Activated B cell treated with CpG ODN at 0.5 μM for 24 hours (primary cell): ENCODE measurements at regions of chr3 and their contacts with region 1.

Region 1: DNA sequence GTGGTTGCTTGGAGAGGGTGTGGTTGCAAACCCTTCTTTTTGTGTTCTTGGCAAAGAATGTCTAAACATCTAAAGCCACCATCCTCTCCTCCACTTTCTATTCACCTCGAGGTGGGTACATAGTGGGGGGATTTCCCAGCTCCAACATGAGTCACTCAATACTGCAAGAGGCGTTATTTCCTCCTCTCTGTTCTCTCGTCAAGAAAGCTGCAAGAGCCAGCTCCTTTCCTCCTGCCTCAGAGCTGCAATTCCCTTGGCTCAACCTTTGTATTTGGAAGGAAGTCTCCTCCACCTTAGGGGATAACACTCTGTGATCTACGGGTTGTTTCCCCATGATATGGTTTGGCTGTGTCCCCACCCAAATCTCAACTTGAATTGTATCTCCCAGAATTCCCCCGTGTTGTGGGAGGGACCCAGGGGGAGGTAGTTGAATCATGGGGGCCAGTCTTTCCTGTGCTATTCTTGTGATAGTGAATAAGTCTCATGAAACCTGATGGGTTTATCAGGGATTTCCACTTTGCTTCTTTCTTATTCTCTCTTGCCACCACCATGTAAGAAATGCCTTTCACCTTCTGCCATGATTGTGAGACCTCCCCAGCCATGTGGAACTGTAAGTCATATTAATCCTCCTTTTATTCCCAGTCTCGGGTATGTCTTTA is 138.4 kb downstream of the PLCL2 start:
- DNase-seq: no peak
- ATAC-seq: peak; percentile 99
- H3K4me3 Mint-ChIP-seq: peak overlapping the region; percentile 49
- H3K27ac Mint-ChIP-seq: peak overlapping the region; percentile 89
- H3K4me1 Mint-ChIP-seq: peaks cover 43% of the 10 kb centered on the region
- H3K27me3 Mint-ChIP-seq: no peaks in the 10 kb centered on the region
- CTCF ChIP-seq: no peak

Region 2: DNA sequence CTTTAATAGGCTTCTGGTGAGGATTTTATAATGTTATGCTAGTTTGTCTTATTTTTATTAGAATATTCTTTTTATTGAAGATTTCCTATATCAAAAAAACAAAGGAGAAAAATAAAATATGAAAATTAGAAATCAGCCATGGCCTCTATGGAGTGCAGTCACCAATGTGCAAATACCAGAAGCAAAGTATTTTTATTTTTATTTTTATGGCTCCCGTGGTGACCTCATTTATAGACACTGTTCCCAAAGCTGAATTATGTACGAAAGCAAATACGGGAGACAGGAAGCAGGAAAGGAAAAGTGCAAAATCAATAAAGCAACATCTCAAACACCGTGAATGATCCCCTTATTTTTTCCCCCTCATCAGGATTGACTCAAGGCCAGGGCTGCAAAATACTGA is 453.0 kb before region 1 on chr3:
- CTCF ChIA-PET with region 1: no interaction called
- POLR2A ChIA-PET with region 1: no interaction called
- intact Hi-C with region 1: no loop called
- DNase-seq: no peak
- ATAC-seq: no peak
- H3K4me3 Mint-ChIP-seq: no peak overlapping the region
- H3K27ac Mint-ChIP-seq: no peak overlapping the region
- H3K4me1 Mint-ChIP-seq: no peaks in the 10 kb centered on the region
- H3K27me3 Mint-ChIP-seq: peaks cover 12% of the 10 kb centered on the region
- CTCF ChIP-seq: no peak

Region 3: DNA sequence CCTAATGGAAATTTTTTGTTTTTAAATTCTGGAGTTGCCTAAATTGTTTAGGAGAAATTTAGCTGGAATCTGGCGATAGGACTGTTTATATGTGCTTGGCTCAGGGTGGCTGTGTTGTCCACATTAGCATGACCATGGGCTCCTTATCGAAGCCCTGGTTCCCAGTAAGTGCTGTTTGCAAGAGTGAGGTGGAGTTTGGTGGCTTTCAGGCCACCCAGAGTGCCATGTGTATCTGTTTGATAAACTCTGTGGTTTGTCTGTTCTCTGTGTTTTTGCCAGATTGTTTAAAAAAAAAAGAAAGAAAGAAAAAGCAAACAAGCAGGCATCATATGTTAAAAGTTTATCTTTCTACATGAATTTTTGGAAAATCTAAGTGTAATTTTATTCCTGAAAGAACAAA is 86.9 kb before region 1 on chr3:
- CTCF ChIA-PET with region 1: no interaction called
- POLR2A ChIA-PET with region 1: no interaction called
- intact Hi-C with region 1: no loop called
- DNase-seq: no peak
- ATAC-seq: no peak
- H3K4me3 Mint-ChIP-seq: peak overlapping the region; percentile 15
- H3K27ac Mint-ChIP-seq: no peak overlapping the region
- H3K4me1 Mint-ChIP-seq: peaks cover 87% of the 10 kb centered on the region
- H3K27me3 Mint-ChIP-seq: no peaks in the 10 kb centered on the region
- CTCF ChIP-seq: no peak

Region 4: GRCh38 chr3:17065315-17065714 is 42.2 kb after region 1 on chr3:
- CTCF ChIA-PET with region 1: no interaction called
- POLR2A ChIA-PET with region 1: interaction called, 11 read pairs
- intact Hi-C with region 1: no loop called
- DNase-seq: no peak
- ATAC-seq: no peak
- H3K4me3 Mint-ChIP-seq: no peak overlapping the region
- H3K27ac Mint-ChIP-seq: no peak overlapping the region
- H3K4me1 Mint-ChIP-seq: peaks cover 2% of the 10 kb centered on the region
- H3K27me3 Mint-ChIP-seq: no peaks in the 10 kb centered on the region
- CTCF ChIP-seq: no peak

Region 5: GRCh38 chr3:17136136-17136721 is 113.1 kb after region 1 on chr3:
- CTCF ChIA-PET with region 1: no interaction called
- POLR2A ChIA-PET with region 1: no interaction called
- intact Hi-C with region 1: no loop called
- DNase-seq: no peak
- ATAC-seq: no peak
- H3K4me3 Mint-ChIP-seq: no peak overlapping the region
- H3K27ac Mint-ChIP-seq: no peak overlapping the region
- H3K4me1 Mint-ChIP-seq: peaks cover 9% of the 10 kb centered on the region
- H3K27me3 Mint-ChIP-seq: peaks cover 5% of the 10 kb centered on the region
- CTCF ChIP-seq: no peak

Region 6: GRCh38 chr3:17195856-17196604 is 172.9 kb after region 1 on chr3:
- CTCF ChIA-PET with region 1: no interaction called
- POLR2A ChIA-PET with region 1: no interaction called
- intact Hi-C with region 1: loop called (anchors 10 kb)
- DNase-seq: peak; percentile 22
- ATAC-seq: peak; percentile 86
- H3K4me3 Mint-ChIP-seq: peak overlapping the region; percentile 56
- H3K27ac Mint-ChIP-seq: peak overlapping the region; percentile 91
- H3K4me1 Mint-ChIP-seq: peaks cover 44% of the 10 kb centered on the region
- H3K27me3 Mint-ChIP-seq: no peaks in the 10 kb centered on the region
- CTCF ChIP-seq: no peak